Brain microvascular endothelial cell (primary cell): ENCODE measurements at regions of chr11 and their contacts with region 1.

Region 1: DNA sequence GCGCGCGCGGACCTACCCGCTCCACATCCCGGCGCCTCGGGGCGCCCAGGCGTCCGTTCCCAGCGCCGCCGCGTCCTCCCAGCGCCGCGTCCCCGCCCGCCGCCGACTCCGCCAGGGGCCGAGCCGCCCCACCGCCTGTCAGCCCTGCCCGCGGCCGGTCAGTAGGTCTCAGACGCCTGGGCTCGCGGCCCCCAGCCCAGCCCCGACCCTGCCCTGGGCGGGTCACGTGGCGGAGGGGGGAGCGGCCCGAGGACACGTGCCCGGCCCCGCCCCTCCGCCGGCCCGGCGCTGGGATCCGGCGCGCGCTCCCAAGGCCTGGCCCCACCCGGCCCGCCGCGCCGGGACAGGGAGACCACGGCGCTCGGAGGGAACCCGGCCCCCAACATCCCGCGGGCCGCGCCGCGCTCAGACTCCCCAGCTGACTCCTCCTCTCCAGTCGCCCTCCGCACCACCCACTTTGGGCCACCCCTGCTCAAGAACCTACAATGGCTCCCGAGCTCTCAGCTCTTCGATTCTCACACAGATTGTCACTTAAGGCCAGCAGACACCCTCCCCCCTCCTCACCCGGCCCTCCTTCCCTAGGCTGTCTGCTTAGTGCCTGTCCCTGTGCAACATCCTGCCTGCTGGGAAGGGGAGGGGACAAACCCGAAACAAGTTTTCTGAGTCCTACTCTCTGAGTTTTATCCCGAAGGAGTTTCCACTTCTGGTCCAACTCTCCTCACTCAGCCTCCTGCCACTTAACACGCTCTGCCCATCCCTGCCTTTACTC is at the start of gene RAB3IL1:
- DNase-seq: no peak
- H3K4me3 ChIP-seq: peak within 1 kb of the TSS; percentile 45
- H3K27ac ChIP-seq: no peak within 1 kb of the TSS
- H3K27me3 ChIP-seq: peaks cover 21% of the 10 kb centered on the region
- CTCF ChIP-seq: no peak

Region 2: GRCh38 chr11:62123669-62124185 is 206.2 kb after region 1 on chr11 and contains the start of gene INCENP:
- in situ Hi-C with region 1: loop called (anchors 25 kb)
- DNase-seq: peak; percentile 99
- H3K4me3 ChIP-seq: peak within 1 kb of the TSS; percentile 99
- H3K27ac ChIP-seq: peak within 1 kb of the TSS; percentile 47
- H3K27me3 ChIP-seq: no peaks in the 10 kb centered on the region
- CTCF ChIP-seq: no peak